Sciatic nerve (tissue), 2 donors: ENCODE measurements at regions of chr19 and their contacts with region 1.

Region 1: GRCh38 chr19:10644260-10645007 is 9.7 kb upstream of the ILF3 start:
- DNase-seq: peak; percentile 94
- ATAC-seq: peak; percentile 90

Region 2: DNA sequence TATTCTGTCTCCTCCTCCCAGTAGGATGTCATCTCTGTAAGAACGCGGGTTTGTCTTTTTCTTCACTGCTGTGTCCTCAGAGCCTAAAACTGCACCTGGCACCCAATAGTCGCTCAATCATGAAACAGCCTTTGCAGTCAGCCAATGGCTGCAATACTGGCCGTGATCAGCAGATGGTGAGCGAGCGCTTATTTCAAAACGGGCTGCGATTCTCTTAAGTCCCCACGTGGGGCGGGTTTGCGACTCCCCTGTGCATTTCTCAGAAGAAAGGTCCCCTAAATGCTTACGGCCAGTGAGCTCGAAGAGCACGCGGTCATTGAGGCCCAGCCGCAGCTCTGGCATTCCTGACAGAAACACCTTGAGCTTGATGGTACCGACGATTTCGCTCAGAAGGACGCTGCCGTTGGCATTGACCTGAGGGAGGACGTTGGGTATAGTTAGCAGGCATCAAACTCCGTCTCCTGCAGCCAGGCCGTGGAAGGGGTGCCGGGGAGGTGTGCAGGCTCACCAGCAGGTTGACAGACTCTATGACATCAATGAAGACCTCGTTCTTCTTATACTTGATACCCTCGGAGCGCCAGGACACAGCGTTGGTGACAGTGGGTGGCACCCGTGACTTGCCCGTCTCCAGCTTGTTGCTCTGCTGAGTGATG is 63.3 kb before region 1 on chr19:
- intact Hi-C with region 1: loop called (anchors 2 kb)
- DNase-seq: peak; percentile 93
- ATAC-seq: peak; percentile 87

Region 3: GRCh38 chr19:10597002-10597401 is 47.4 kb before region 1 on chr19:
- intact Hi-C with region 1: loop called (anchors 5 kb)
- DNase-seq: no peak
- ATAC-seq: no peak